ENCODE measurements at regions of chr4 and their contacts with region 1.

Region 1: GRCh38 chr4:85474818-85475630 is at the start of gene ARHGAP24:
- DNase-seq: peak; percentile 78
- CTCF ChIP-seq: no peak

Region 2: GRCh38 chr4:85489273-85490265 is 14.5 kb after region 1 on chr4:
- CTCF ChIA-PET with region 1: interaction called, 10 read pairs
- POLR2A ChIA-PET with region 1: no interaction called
- DNase-seq: no peak
- CTCF ChIP-seq: no peak